ENCODE measurements at regions of chr22 and their contacts with region 1.

Region 1: GRCh38 chr22:49381595-49382450 is 445.9 kb downstream of the BRD1 start:
- DNase-seq: no peak
- H3K4me3 ChIP-seq: peak overlapping the region; percentile 18
- H3K27ac ChIP-seq: peak overlapping the region; percentile 100
- H3K4me1 ChIP-seq: peaks cover 54% of the 10 kb centered on the region
- CTCF ChIP-seq: no peak

Region 2: DNA sequence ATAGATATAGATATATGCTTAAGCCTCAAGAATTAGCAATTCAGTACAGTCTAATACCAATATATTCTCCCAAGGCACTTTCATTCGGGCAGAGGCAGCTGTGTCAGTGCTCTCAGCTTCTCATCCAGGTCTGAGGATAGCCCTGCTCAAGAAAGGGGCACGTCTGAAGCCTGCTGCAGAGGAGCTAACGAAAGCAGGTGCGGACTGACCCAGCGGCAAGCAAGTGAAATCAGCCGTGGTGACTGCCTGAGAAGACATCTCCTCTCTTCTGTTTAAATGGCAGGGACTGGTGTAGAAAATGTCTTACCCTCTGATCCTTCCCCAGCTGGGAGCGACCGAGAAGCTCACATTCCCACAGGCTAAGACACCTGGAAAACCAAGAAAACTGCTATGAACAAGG is 22.7 kb before region 1 on chr22:
- CTCF ChIA-PET with region 1: no interaction called
- POLR2A ChIA-PET with region 1: interaction called, 10 read pairs
- intact Hi-C with region 1: loop called (anchors 1 kb)
- DNase-seq: peak; percentile 88
- H3K4me3 ChIP-seq: peak overlapping the region; percentile 7
- H3K27ac ChIP-seq: peak overlapping the region; percentile 93
- H3K4me1 ChIP-seq: peaks cover 60% of the 10 kb centered on the region
- CTCF ChIP-seq: no peak

Region 3: DNA sequence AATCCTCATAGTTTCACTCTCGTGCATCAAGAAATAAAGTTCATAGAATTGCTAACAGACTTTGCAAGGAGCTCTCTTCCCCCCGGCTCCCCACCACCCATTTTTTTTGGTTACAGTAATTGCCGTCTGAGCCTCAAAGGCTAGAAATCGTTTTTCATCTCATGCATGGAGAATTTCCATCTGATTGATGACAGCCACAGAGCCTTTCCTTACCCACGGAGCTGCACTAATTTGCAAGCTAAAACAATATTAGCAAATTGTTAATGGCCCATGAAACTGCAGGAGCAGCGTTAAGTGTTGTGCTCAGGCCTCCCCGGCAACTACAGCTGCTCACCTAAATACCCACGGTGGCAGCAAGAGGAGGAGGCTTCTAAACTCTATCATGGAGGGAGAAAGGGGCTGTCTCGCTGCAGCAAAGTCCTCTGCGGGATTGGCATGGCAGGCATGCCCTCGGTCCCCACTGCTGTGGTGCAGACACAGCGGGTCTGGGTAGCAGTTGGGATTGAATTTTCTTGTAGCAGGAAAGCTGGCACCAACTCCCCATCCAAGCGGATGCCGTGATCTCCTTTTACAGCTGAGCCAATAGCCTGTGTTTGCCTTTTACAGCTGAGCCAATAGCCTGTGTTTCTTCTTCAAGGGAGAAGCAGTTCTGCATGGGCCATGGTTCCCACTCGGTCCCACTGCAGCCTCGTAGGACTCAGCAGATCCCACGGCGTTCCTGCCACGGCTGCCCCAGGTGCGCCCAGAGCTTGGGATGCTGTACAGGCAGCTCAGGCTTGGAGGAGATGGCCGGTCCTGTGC is 33.5 kb after region 1 on chr22:
- CTCF ChIA-PET with region 1: no interaction called
- POLR2A ChIA-PET with region 1: no interaction called
- intact Hi-C with region 1: no loop called
- DNase-seq: no peak
- H3K4me3 ChIP-seq: no peak overlapping the region
- H3K27ac ChIP-seq: no peak overlapping the region
- H3K4me1 ChIP-seq: no peaks in the 10 kb centered on the region
- CTCF ChIP-seq: no peak

Measured in OCI-LY7 (cell line).